Right lobe of liver (tissue), 6 donors: ENCODE measurements at regions of chr6 and their contacts with region 1.

Region 1: GRCh38 chr6:35731736-35732532 is 4.9 kb upstream of the ARMC12 start:
- DNase-seq: peak; percentile 97 to 98 (median 97)
- ATAC-seq: peak; percentile 61 to 65 (median 62)
- H3K4me3 ChIP-seq: peak overlapping the region; percentile 82 to 86 (median 85)
- H3K27ac ChIP-seq: peak overlapping the region; percentile 98 to 99 (median 99)
- H3K4me1 ChIP-seq: peaks cover 11 to 64% (median 35%) of the 10 kb centered on the region in 4 donors
- H3K27me3 ChIP-seq: no peaks in the 10 kb centered on the region
- CTCF ChIP-seq: peak in 1 of 4 donors; percentile 13
- POLR2A ChIP-seq: peak; percentile 82

Region 2: DNA sequence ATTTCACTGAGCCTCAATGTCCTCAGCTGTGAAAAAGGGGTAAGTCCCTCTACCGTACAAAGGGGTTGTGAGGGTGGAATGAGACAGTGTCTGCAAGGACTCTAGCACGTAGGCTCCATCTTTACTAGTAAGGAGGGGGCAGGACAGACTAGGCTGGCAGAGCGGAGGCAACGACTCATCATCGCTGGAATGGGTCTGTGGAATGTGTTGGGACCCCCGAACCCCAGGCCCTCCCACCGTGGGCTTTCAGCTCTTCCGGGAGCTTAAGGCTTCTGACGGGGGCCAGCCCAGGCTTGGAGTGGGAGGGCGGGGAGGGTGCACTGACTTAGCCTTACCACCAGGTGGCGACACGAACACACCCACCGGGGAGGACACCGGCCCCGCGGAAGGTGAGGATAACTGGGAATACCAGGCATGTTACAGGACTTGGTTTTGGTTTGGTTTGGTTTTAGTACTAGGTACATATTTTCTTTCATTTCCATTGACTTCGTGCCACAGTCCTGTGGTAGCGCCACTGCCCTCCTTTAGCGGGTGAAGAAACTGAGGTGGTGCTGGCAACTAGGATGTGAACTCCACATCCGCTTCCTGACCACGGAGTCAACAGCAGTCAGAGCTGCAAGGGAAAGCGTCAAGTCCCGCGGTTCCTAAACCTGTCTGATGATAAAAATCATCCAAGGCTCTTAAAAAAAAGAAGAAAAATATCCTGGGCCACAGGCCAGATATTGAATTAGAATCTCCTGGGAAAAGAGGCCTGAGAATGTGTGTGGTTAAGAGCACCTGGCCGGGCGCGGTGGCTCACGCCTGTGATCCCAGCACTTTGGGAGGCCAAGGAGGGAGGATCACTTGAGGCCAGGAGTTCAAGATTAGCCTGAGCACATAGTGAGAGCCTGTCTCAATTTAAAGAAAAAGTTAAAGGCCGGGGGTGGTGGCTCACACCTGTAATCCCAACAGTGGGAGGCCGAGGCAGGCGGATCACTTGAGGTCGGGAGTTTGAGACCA is 209.0 kb before region 1 on chr6:
- intact Hi-C with region 1: loop called in 1 of 2 experiments (anchors 5 kb)
- DNase-seq: peak; percentile 79 to 82 (median 81)
- ATAC-seq: peak; percentile 96 to 99 (median 98)
- H3K4me3 ChIP-seq: peak overlapping the region in 1 of 3 donors; percentile 28
- H3K27ac ChIP-seq: no peak overlapping the region
- H3K4me1 ChIP-seq: no peaks in the 10 kb centered on the region
- H3K27me3 ChIP-seq: no peaks in the 10 kb centered on the region
- CTCF ChIP-seq: peak; percentile 93 to 99 (median 98)
- POLR2A ChIP-seq: no peak

Region 3: GRCh38 chr6:35569011-35569461 is 162.9 kb before region 1 on chr6:
- intact Hi-C with region 1: loop called in 1 of 2 experiments (anchors 10 kb)
- DNase-seq: peak; percentile 43 to 64 (median 62)
- ATAC-seq: peak; percentile 77 to 89 (median 84)
- H3K4me3 ChIP-seq: no peak overlapping the region
- H3K27ac ChIP-seq: no peak overlapping the region
- H3K4me1 ChIP-seq: no peaks in the 10 kb centered on the region
- H3K27me3 ChIP-seq: no peaks in the 10 kb centered on the region
- CTCF ChIP-seq: peak; percentile 40 to 67 (median 46)
- POLR2A ChIP-seq: no peak

Region 4: GRCh38 chr6:35583893-35584688 is 147.8 kb before region 1 on chr6:
- intact Hi-C with region 1: loop called in 1 of 2 experiments (anchors 10 kb)
- DNase-seq: peak in 2 of 3 donors; percentile 35 to 67
- ATAC-seq: peak; percentile 58 to 97 (median 86)
- H3K4me3 ChIP-seq: no peak overlapping the region
- H3K27ac ChIP-seq: peak overlapping the region in 2 of 3 donors; percentile 1 to 16
- H3K4me1 ChIP-seq: peaks cover 0 to 29% (median 0%) of the 10 kb centered on the region in 4 donors
- H3K27me3 ChIP-seq: no peaks in the 10 kb centered on the region
- CTCF ChIP-seq: peak; percentile 60 to 82 (median 71)
- POLR2A ChIP-seq: no peak